Aorta (tissue), 5 donors: ENCODE measurements at regions of chr22 and their contacts with region 1.

Region 1: GRCh38 chr22:30763815-30764686 is 69.4 kb downstream of the OSBP2 start:
- DNase-seq: no peak
- ATAC-seq: peak; percentile 69
- H3K4me3 ChIP-seq: no peak overlapping the region
- H3K27ac ChIP-seq: no peak overlapping the region
- H3K4me1 ChIP-seq: no peaks in the 10 kb centered on the region
- H3K27me3 ChIP-seq: no peaks in the 10 kb centered on the region

Region 2: DNA sequence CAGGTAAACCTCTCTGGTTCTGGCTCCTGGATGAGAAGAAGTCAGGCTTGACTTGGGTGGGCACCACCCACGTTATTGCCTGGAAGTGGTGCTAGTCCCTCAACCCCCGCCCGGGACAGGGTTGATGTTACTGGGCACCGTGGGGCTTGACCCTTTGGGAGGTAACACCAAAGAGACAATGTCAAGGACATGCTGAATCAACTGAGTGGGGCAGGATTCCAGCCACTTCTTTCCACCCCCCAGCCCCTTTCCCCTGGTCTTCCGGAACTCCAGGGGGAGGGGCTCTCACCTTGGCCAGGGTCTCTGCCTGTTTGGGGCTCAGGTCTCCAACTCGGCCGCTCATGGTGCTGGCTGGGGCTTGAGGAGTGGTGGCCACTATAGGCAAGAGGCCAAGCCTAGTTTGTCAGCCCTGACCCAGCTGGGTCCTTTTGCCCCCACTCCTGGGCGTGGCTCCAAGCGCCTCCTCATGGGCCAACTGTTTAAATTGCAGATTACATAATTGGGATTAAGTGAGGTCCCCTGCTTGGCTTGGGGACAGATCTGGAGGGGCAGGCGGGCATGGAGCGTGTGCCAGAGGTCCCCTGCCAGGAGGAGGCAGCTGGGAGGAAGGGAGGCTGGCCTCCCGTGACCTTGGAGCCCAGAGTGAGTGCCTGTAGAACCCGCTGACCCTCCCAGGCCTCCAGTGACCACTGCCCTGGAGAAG is 292.3 kb before region 1 on chr22 and contains the start of gene SEC14L3:
- intact Hi-C with region 1: no loop called
- DNase-seq: no peak
- ATAC-seq: no peak
- H3K4me3 ChIP-seq: no peak within 1 kb of the TSS
- H3K27ac ChIP-seq: no peak within 1 kb of the TSS
- H3K4me1 ChIP-seq: no peaks in the 10 kb centered on the region
- H3K27me3 ChIP-seq: peaks cover 0 to 2% of the 10 kb centered on the region in 2 donors
- total RNA-seq, gene SEC14L3: not detected

Region 3: DNA sequence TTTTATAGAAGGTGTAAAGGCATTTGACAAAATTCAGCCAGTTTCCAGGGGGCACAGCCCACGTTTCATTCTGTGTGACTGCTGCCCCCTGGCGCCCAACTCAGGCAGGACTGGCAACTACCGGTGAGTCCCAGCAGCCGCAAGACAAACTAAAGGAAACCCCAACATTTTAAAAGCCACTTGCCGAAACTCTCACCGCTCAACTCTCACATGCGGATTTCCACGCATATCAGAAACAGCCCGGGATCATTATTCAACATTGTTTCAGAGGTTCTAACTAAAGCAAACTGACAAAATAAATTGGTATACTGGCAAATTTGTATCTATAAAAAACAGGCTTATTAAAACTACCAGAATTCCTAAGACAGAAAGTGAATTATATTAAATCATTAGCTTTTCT is 156.4 kb after region 1 on chr22:
- intact Hi-C with region 1: loop called (anchors 2 to 5 kb)
- DNase-seq: peak; percentile 84 to 95
- ATAC-seq: peak; percentile 80
- H3K4me3 ChIP-seq: no peak overlapping the region
- H3K27ac ChIP-seq: no peak overlapping the region
- H3K4me1 ChIP-seq: peaks cover 0 to 2% of the 10 kb centered on the region in 2 donors
- H3K27me3 ChIP-seq: no peaks in the 10 kb centered on the region

Region 4: DNA sequence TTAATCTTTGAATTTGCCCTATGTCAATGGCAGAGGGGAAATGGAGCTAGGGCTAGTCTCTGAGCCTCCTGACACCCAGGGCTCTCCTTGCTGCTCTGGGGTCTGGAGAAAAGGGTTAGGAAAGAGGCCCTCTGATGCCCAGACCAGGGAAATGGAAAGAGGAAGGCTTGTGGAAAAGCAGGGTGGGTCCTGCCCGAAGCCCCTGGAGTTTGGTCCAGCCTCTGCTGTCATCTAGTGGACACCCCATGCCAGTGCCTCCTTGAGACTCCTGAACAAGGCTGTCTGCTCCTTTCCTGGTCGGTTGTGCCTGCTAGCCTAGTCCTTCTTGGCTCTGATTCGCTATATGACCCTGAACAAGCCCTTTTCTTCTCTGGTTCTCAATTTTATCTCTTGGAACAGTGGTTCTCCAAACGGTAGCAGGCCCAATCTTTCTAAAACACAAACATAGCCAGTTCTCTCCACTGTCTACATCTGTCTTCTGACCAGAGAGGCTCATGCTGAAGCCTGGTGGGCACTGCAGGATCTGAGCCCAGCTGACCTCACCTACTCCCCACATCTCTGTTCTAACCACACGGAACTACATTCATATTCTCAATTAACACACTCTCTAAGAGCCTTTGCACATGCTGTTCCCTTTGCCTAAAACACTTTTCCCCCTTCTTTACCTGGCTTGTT is 385.0 kb after region 1 on chr22:
- intact Hi-C with region 1: loop called (anchors 2 to 5 kb)
- DNase-seq: peak; percentile 80 to 86
- ATAC-seq: peak; percentile 95
- H3K4me3 ChIP-seq: no peak overlapping the region
- H3K27ac ChIP-seq: peak overlapping the region; percentile 89 to 97
- H3K4me1 ChIP-seq: peaks cover 0 to 3% of the 10 kb centered on the region in 2 donors
- H3K27me3 ChIP-seq: no peaks in the 10 kb centered on the region